Dendritic cell treated with granulocyte-macrophage colony-stimulating factor and Interleukin-4, amounts not matched to agents 40 ng/mL and 50 ng/mL, for 4 days (primary cell): ENCODE measurements at regions of chr1 and their contacts with region 1.

Region 1: GRCh38 chr1:93021539-93022134 is 57.4 kb upstream of the MTF2 start:
- H3K4me3 Mint-ChIP-seq: no peak overlapping the region
- H3K27ac Mint-ChIP-seq: no peak overlapping the region
- H3K4me1 Mint-ChIP-seq: peaks cover 5% of the 10 kb centered on the region
- H3K27me3 Mint-ChIP-seq: no peaks in the 10 kb centered on the region

Region 2: GRCh38 chr1:93061895-93062792 is 40.5 kb after region 1 on chr1:
- intact Hi-C with region 1: loop called (anchors 1 kb)
- H3K4me3 Mint-ChIP-seq: no peak overlapping the region
- H3K27ac Mint-ChIP-seq: no peak overlapping the region
- H3K4me1 Mint-ChIP-seq: no peaks in the 10 kb centered on the region
- H3K27me3 Mint-ChIP-seq: peaks cover 11% of the 10 kb centered on the region